CD4-positive, alpha-beta memory T cell (primary cell): ENCODE measurements at regions of chr19 and their contacts with region 1.

Region 1: GRCh38 chr19:38647368-38647965 is at the start of gene ACTN4:
- DNase-seq: peak; percentile 98 to 100 (median 100)
- H3K4me3 ChIP-seq: peak within 1 kb of the TSS; percentile 80 to 81
- H3K4me3 Mint-ChIP-seq: peak within 1 kb of the TSS; percentile 91 to 98 (median 95)
- H3K27ac ChIP-seq: peak within 1 kb of the TSS; percentile 74
- H3K27ac Mint-ChIP-seq: peak within 1 kb of the TSS; percentile 85 to 94 (median 91)
- H3K4me1 ChIP-seq: peaks cover 50% of the 10 kb centered on the region
- H3K4me1 Mint-ChIP-seq: peaks cover 29 to 52% (median 41%) of the 10 kb centered on the region in 4 donors
- H3K27me3 ChIP-seq: no peaks in the 10 kb centered on the region
- H3K27me3 Mint-ChIP-seq: no peaks in the 10 kb centered on the region
- total RNA-seq, gene ACTN4: 151 to 155 TPM

Region 2: DNA sequence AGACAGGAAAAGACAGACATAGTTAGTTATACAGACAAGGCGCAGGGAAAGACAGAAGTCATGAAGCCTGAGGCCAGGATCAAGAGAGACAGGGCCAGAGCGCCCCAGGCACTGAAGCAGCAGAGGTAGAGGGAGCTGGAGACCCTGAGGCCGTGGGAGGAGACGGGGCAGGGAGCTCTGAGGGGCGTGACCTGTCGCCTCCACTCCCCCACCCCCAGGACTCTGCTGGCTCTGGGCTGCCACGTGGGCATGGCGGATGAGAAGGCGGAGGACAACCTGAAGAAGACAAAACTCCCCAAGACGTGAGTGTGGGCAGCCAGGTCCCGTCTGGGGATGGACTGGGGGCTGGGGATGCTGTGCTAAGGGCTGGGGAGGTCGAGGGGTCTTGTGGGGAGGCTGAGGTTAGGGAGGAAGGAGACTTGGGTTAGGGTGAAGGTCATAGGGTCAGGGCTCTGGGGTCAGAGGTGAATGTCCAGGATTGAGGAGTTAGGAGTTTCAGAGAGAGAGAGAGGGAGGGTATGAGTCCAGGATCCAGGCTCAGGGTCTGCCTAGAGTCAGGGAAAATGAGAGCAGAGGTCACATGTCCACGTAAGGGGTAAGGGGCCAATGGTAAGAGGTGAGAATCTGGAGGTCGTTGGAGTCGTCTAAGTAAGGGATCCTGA is 182.9 kb before region 1 on chr19:
- CTCF ChIA-PET with region 1: no interaction called
- POLR2A ChIA-PET with region 1: no interaction called
- intact Hi-C with region 1: no loop called
- DNase-seq: no peak
- H3K4me3 ChIP-seq: no peak overlapping the region
- H3K4me3 Mint-ChIP-seq: no peak overlapping the region
- H3K27ac ChIP-seq: no peak overlapping the region
- H3K27ac Mint-ChIP-seq: peak overlapping the region in 1 of 7 donors; percentile 25
- H3K4me1 ChIP-seq: no peaks in the 10 kb centered on the region
- H3K4me1 Mint-ChIP-seq: no peaks in the 10 kb centered on the region
- H3K27me3 ChIP-seq: no peaks in the 10 kb centered on the region
- H3K27me3 Mint-ChIP-seq: peaks cover 6 to 15% of the 10 kb centered on the region in 2 donors

Region 3: DNA sequence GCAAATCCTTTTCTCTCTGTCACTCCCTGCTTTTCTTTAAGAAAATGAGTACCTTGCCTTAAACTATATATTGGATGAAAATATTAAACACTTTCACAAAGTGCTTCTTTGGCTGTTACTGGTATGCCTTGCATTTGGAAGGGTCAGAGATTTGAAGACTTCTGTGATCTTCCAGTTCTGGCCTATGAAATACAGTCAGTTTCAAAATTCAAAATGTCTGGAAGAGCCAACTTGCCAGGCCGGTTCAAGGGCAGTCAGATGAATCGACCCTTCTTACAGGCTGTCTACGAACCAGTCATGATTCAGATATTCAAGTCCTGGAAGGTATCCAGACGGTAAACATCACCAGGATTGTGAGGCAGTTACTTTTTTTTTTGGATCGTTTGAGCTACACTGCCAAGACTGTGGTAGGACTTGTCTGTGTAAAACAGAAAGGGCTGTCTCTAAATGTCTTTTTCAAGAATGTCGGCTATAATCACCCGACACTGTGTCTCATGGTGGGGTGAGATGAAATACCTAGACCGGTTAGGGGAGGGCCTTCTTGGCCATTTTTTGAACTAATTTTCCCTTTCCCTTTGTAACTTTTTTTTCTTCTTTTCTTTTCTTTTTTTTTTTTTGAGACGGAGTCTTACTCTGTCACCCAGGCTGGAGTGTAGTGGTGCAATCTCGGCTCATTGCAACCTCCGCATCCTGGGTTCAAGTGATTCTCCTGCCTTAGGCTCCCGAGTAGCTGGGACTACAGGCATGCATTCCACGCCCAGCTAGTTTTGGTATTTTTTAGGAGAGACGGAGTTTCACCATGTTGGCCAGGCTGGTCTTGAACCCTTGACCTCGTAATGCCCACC is 11.2 kb after region 1 on chr19:
- CTCF ChIA-PET with region 1: interaction called, 3 read pairs
- POLR2A ChIA-PET with region 1: interaction called, 17 read pairs
- intact Hi-C with region 1: loop called (anchors 1 kb)
- DNase-seq: no peak
- H3K4me3 ChIP-seq: no peak overlapping the region
- H3K4me3 Mint-ChIP-seq: peak overlapping the region in 3 of 8 donors; percentile 39 to 79 (median 46)
- H3K27ac ChIP-seq: peak overlapping the region; percentile 5
- H3K27ac Mint-ChIP-seq: peak overlapping the region in 6 of 7 donors; percentile 80 to 95 (median 92)
- H3K4me1 ChIP-seq: peaks cover 93% of the 10 kb centered on the region
- H3K4me1 Mint-ChIP-seq: peaks cover 45 to 94% (median 73%) of the 10 kb centered on the region in 4 donors
- H3K27me3 ChIP-seq: no peaks in the 10 kb centered on the region
- H3K27me3 Mint-ChIP-seq: no peaks in the 10 kb centered on the region

Region 4: DNA sequence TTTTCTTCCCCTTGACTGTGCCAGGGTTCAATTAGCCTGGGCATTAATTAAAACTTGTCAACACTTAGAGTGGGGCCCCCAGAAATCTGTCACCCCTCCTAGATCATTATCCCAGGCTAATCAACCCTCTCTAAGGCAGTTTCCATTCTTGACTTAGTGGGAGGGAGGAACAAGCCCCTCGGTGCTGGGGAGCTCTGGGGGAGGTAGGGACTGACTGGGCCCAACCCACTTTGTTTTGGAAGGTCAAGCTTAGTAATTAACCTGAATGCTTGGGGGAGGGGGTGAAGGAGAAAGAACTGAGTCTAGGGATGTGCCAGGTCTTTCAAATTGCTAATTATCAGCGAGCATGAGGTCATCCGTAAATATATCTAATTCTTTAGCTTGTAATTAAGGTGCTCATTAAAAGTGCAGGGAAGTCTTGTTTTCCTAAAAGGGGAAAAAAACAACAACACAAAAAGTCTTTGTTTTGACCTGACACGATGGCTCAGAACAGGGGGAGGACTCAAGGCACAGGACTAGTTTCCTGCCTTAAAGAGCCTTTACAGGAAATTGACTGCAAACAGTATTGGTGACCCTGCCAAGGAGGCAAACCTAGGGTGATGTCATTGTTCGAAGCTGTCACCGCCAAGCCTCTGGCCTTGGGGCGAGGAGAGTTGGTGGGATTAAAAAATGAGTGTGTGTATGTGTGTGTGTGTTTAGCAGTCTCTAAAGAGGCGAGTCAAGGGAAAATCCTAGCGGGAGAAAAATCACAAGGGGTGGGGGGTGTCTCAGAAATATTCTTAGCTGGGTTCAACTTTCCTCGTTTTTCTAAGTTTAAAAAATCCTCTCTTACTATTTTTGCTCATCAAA is 19.4 kb after region 1 on chr19:
- CTCF ChIA-PET with region 1: interaction called, 3 read pairs
- POLR2A ChIA-PET with region 1: interaction called, 28 read pairs
- intact Hi-C with region 1: no loop called
- DNase-seq: peak in 3 of 5 donors; percentile 33 to 66 (median 33)
- H3K4me3 ChIP-seq: no peak overlapping the region
- H3K4me3 Mint-ChIP-seq: peak overlapping the region; percentile 75 to 92 (median 82)
- H3K27ac ChIP-seq: peak overlapping the region; percentile 44
- H3K27ac Mint-ChIP-seq: peak overlapping the region; percentile 64 to 100 (median 95)
- H3K4me1 ChIP-seq: peaks cover 99% of the 10 kb centered on the region
- H3K4me1 Mint-ChIP-seq: peaks cover 56 to 100% (median 86%) of the 10 kb centered on the region in 4 donors
- H3K27me3 ChIP-seq: no peaks in the 10 kb centered on the region
- H3K27me3 Mint-ChIP-seq: no peaks in the 10 kb centered on the region

Region 5: DNA sequence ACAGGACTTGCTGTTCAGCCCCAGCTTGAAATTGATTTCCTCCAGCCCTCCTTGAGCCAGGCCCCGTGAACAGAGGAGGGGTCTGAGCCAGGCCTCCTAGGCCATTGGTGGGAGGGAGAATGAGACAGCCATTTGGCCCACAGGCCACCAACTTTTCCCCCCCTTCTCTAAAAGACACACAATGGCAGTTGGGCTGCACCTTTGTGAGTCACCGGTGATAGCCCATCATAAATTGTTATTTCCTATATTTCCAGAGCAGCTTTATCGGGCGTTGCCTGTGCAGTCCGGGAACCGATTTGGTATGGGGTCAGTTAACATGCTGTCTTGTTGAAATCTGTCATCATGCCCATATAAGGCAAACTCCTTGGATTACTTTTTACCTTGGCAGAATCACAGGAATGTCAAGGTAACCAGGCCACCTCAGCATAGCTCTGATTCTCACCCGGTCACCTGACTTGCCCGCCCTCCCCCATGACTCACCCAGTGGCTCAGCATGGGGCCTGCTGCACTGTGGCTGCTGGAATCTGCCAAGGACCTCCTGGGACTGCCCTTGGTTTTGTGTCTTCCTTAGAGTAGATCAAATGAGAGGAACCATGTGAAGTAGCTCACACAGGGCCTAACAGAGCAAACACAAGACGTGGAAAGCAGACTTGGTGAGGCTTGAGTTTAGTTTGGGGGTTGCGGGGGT is 36.1 kb after region 1 on chr19:
- CTCF ChIA-PET with region 1: interaction called, 5 read pairs
- POLR2A ChIA-PET with region 1: interaction called, 18 read pairs
- intact Hi-C with region 1: no loop called
- DNase-seq: peak in 2 of 5 donors; percentile 35 to 89
- H3K4me3 ChIP-seq: no peak overlapping the region
- H3K4me3 Mint-ChIP-seq: peak overlapping the region in 7 of 8 donors; percentile 35 to 80 (median 53)
- H3K27ac ChIP-seq: peak overlapping the region; percentile 58
- H3K27ac Mint-ChIP-seq: peak overlapping the region; percentile 89 to 97 (median 96)
- H3K4me1 ChIP-seq: peaks cover 98% of the 10 kb centered on the region
- H3K4me1 Mint-ChIP-seq: peaks cover 59 to 94% (median 79%) of the 10 kb centered on the region in 4 donors
- H3K27me3 ChIP-seq: no peaks in the 10 kb centered on the region
- H3K27me3 Mint-ChIP-seq: no peaks in the 10 kb centered on the region

Region 6: DNA sequence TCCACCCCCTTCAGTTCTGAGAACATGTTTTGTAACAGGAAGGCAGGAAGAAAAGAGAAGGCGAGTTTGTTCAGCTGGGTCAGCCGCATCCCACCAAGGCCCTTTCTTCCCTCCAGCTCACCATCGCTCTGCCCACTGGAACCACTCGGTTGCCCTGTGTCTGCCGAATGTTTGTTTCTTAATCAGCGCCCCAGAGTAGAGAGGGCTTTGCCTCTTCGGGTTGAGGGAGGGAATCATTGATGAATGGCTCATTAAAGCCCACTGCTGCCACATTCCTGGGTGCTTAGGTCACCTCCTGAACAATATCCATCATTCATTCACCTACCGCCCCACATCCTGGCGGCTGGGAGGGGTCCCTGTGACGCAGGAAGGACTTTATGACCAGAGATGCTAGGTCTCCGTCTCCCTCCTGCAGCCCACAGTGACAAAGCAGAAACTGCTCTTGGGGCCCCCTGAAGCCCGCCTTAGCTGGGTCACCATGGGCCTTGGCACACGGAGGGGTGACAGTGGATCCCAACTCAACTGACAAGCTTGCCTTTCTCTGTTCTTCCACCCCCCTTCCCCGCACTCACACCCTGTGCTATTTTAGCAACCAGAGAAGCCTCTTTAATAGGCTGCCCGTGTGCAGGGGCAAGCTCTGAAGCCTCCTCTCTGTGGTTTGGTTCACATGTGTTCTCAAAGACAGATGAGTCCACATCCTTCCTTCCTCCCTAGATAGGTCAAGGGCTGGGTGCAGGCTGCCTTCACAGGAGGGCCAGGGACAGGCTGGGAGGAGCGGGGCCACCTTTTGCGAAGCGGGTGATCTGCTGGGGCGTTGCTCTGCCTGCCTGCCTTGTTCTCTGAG is 46.1 kb after region 1 on chr19:
- CTCF ChIA-PET with region 1: interaction called, 3 read pairs
- POLR2A ChIA-PET with region 1: interaction called, 23 read pairs
- intact Hi-C with region 1: no loop called
- DNase-seq: peak; percentile 56 to 69 (median 65)
- H3K4me3 ChIP-seq: peak overlapping the region in 1 of 2 donors; percentile 22
- H3K4me3 Mint-ChIP-seq: peak overlapping the region; percentile 65 to 82 (median 79)
- H3K27ac ChIP-seq: peak overlapping the region; percentile 32
- H3K27ac Mint-ChIP-seq: peak overlapping the region; percentile 81 to 92 (median 88)
- H3K4me1 ChIP-seq: peaks cover 98% of the 10 kb centered on the region
- H3K4me1 Mint-ChIP-seq: peaks cover 54 to 96% (median 77%) of the 10 kb centered on the region in 4 donors
- H3K27me3 ChIP-seq: no peaks in the 10 kb centered on the region
- H3K27me3 Mint-ChIP-seq: no peaks in the 10 kb centered on the region

Region 7: DNA sequence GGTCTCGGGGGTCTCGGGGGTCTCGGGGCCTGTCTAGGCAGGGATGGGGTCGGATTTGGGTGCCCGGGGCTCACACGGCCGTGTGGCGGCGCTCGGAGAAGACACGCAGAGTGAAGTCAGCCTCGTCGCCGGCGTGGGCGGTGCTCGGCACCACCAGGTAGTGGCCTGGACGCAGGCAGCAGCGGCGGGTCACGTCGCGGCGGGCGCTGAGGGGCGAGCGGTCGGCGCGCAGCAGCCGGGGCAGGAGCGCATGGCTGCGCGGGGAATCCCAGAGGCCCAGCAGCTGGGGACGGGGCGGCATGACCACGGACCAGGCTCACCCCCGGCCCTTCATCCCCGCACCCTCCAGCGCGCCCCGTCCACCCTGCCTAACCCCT is 88.6 kb after region 1 on chr19:
- CTCF ChIA-PET with region 1: interaction called, 4 read pairs
- POLR2A ChIA-PET with region 1: interaction called, 11 read pairs
- intact Hi-C with region 1: loop called (anchors 2 kb)
- DNase-seq: peak; percentile 57 to 80 (median 59)
- H3K4me3 ChIP-seq: peak overlapping the region in 1 of 2 donors; percentile 14
- H3K4me3 Mint-ChIP-seq: peak overlapping the region; percentile 27 to 77 (median 60)
- H3K27ac ChIP-seq: peak overlapping the region; percentile 30
- H3K27ac Mint-ChIP-seq: peak overlapping the region in 4 of 7 donors; percentile 30 to 88 (median 74)
- H3K4me1 ChIP-seq: peaks cover 57% of the 10 kb centered on the region
- H3K4me1 Mint-ChIP-seq: peaks cover 24 to 69% (median 42%) of the 10 kb centered on the region in 4 donors
- H3K27me3 ChIP-seq: no peaks in the 10 kb centered on the region
- H3K27me3 Mint-ChIP-seq: peaks cover 0 to 2% of the 10 kb centered on the region in 2 donors

Region 8: GRCh38 chr19:38899447-38900219 is 252.2 kb after region 1 on chr19 and contains the starts of genes NFKBIB and SIRT2:
- CTCF ChIA-PET with region 1: no interaction called
- POLR2A ChIA-PET with region 1: interaction called, 4 read pairs
- intact Hi-C with region 1: loop called (anchors 1 kb)
- DNase-seq: peak; percentile 98 to 100 (median 100)
- H3K4me3 ChIP-seq: peak within 1 kb of the TSS; percentile 71 to 87
- H3K4me3 Mint-ChIP-seq: peak within 1 kb of the TSS; percentile 92 to 98 (median 96)
- H3K27ac ChIP-seq: peak within 1 kb of the TSS; percentile 99
- H3K27ac Mint-ChIP-seq: peak within 1 kb of the TSS; percentile 90 to 100 (median 99)
- H3K4me1 ChIP-seq: peaks cover 34% of the 10 kb centered on the region
- H3K4me1 Mint-ChIP-seq: peaks cover 17 to 59% (median 39%) of the 10 kb centered on the region in 4 donors
- H3K27me3 ChIP-seq: no peaks in the 10 kb centered on the region
- H3K27me3 Mint-ChIP-seq: no peaks in the 10 kb centered on the region
- total RNA-seq, gene NFKBIB: 23.9 to 26.0 TPM
- total RNA-seq, gene SIRT2: 47.0 to 50.0 TPM